Endothelial cell of umbilical vein (primary cell): ENCODE measurements at regions of chr14 and their contacts with region 1.

Region 1: DNA sequence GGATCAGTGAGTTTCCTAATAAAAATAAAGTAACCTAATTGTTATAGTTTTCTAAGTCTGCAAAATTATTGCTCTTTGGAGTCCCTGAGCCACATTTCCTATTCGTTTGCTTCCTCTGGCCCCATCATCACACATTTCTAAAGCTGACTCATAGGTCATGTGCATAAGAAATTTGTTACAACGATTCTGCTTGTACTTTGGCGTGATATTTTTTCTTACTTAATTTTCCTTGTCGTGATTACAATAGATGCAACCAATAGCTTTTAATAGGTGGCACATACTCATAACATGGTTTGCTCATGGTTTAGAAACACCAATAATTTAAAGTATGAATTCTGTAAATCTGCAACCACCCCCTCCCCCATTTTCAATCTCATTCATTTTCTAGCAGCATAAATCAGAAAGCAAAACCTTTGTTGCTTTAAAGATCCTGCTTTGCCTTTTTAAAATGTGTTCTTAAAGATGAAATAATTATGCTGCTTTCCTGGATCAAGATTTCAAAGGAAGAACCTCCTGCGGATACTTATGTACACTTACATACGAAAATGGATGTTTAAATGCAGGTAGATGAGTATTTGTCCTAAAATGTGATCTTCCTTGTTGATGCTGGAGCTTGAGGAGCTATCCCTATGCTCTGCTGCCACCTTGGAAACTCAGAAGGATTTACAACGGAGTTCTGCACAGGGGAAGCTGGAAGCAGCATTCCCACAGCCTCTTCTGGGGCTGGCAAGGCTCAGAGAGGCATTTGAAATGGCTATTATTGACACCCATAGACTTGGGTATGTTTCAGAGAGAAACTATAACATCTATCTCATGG is 1.7 kb upstream of the FLRT2 start:
- DNase-seq: peak; percentile 94
- H3K4me3 ChIP-seq: peak overlapping the region; percentile 38 to 94 (median 93)
- H3K27ac ChIP-seq: peak overlapping the region; percentile 93
- H3K4me1 ChIP-seq: peaks cover 19% of the 10 kb centered on the region
- H3K27me3 ChIP-seq: no peaks in the 10 kb centered on the region
- CTCF ChIP-seq: peak; percentile 52 to 65
- POLR2A ChIP-seq: peak; percentile 39

Region 2: GRCh38 chr14:84006643-84007155 is 1521.6 kb before region 1 on chr14:
- CTCF ChIA-PET with region 1: interaction called, 15 read pairs
- POLR2A ChIA-PET with region 1: interaction called, 4 read pairs
- dilution Hi-C with region 1: no loop called
- intact Hi-C with region 1: loop called (anchors 1 kb)
- DNase-seq: peak; percentile 96
- H3K4me3 ChIP-seq: no peak overlapping the region
- H3K27ac ChIP-seq: peak overlapping the region; percentile 61
- H3K4me1 ChIP-seq: peaks cover 10% of the 10 kb centered on the region
- H3K27me3 ChIP-seq: no peaks in the 10 kb centered on the region
- CTCF ChIP-seq: peak; percentile 10 to 11
- POLR2A ChIP-seq: no peak

Region 3: GRCh38 chr14:84482256-84483066 is 1045.8 kb before region 1 on chr14:
- CTCF ChIA-PET with region 1: interaction called, 7 read pairs
- POLR2A ChIA-PET with region 1: interaction called, 4 read pairs
- dilution Hi-C with region 1: no loop called
- intact Hi-C with region 1: loop called (anchors 1 kb)
- DNase-seq: peak; percentile 71
- H3K4me3 ChIP-seq: peak overlapping the region in 1 of 3 experiments; percentile 4
- H3K27ac ChIP-seq: peak overlapping the region; percentile 78
- H3K4me1 ChIP-seq: peaks cover 33% of the 10 kb centered on the region
- H3K27me3 ChIP-seq: no peaks in the 10 kb centered on the region
- CTCF ChIP-seq: no peak
- POLR2A ChIP-seq: no peak

Region 4: GRCh38 chr14:84806627-84807026 is 721.7 kb before region 1 on chr14:
- CTCF ChIA-PET with region 1: no interaction called
- POLR2A ChIA-PET with region 1: no interaction called
- dilution Hi-C with region 1: no loop called
- intact Hi-C with region 1: loop called (anchors 2 kb)
- DNase-seq: peak; percentile 47
- H3K4me3 ChIP-seq: no peak overlapping the region
- H3K27ac ChIP-seq: peak overlapping the region; percentile 66
- H3K4me1 ChIP-seq: peaks cover 10% of the 10 kb centered on the region
- H3K27me3 ChIP-seq: no peaks in the 10 kb centered on the region
- CTCF ChIP-seq: no peak
- POLR2A ChIP-seq: no peak

Region 5: GRCh38 chr14:85058150-85058549 is 470.1 kb before region 1 on chr14:
- CTCF ChIA-PET with region 1: no interaction called
- POLR2A ChIA-PET with region 1: no interaction called
- dilution Hi-C with region 1: no loop called
- intact Hi-C with region 1: no loop called
- DNase-seq: no peak
- H3K4me3 ChIP-seq: no peak overlapping the region
- H3K27ac ChIP-seq: no peak overlapping the region
- H3K4me1 ChIP-seq: no peaks in the 10 kb centered on the region
- H3K27me3 ChIP-seq: no peaks in the 10 kb centered on the region
- CTCF ChIP-seq: no peak
- POLR2A ChIP-seq: no peak

Region 6: DNA sequence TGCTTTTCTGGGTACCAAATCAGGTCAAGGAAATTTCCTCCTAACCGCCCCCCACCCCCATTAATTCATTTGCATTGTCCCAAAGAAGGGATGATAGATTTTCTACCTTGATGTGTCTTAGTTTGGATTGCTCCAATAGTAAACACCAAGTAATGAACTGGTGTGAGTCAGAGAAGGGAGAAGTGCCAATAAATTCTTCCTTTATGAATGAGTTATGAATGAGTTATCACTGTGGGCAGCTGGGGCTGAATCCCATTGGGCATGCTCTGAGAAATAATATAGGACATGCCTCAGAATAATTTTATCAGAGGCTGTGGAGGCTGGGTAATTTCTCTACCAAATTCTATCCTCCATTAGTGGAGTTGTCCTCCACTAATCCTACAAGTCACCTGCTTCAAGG is 276.3 kb before region 1 on chr14:
- CTCF ChIA-PET with region 1: no interaction called
- POLR2A ChIA-PET with region 1: no interaction called
- dilution Hi-C with region 1: no loop called
- intact Hi-C with region 1: loop called (anchors 2 kb)
- DNase-seq: peak; percentile 84
- H3K4me3 ChIP-seq: no peak overlapping the region
- H3K27ac ChIP-seq: no peak overlapping the region
- H3K4me1 ChIP-seq: peaks cover 19% of the 10 kb centered on the region
- H3K27me3 ChIP-seq: no peaks in the 10 kb centered on the region
- CTCF ChIP-seq: no peak
- POLR2A ChIP-seq: no peak

Region 7: DNA sequence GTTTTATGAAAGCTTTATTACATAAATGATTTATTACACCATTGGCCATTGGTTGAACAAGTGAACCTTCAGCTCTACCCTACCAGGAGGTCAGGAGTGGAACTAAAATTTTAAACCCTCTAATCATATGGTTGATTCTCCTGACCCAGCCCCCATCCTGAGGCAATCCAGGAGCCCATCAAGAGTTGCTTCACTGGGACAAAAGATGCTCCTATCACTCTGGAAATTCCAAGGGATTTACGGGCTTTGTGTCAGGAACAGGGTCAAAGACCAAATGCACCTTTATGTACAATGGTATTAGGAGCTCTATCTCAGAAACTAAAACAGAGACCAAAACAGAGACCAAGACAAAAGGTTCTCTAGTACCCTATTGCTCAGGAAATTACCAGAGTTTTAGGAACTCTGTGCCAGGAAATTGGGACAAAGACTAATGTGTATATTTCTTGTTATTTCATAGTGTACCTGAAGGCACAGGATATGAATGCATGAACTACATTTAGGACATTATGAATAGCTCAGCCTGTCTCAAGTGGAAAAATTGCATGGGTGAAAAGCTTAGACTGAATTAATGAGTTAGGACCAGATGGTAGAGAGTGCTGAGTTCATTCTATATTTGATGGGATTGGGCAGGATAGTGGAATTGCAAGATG is 170.0 kb before region 1 on chr14:
- CTCF ChIA-PET with region 1: no interaction called
- POLR2A ChIA-PET with region 1: no interaction called
- dilution Hi-C with region 1: no loop called
- intact Hi-C with region 1: loop called (anchors 2 kb)
- DNase-seq: peak; percentile 18
- H3K4me3 ChIP-seq: no peak overlapping the region
- H3K27ac ChIP-seq: no peak overlapping the region
- H3K4me1 ChIP-seq: peaks cover 15% of the 10 kb centered on the region
- H3K27me3 ChIP-seq: no peaks in the 10 kb centered on the region
- CTCF ChIP-seq: no peak
- POLR2A ChIP-seq: no peak

Region 8: DNA sequence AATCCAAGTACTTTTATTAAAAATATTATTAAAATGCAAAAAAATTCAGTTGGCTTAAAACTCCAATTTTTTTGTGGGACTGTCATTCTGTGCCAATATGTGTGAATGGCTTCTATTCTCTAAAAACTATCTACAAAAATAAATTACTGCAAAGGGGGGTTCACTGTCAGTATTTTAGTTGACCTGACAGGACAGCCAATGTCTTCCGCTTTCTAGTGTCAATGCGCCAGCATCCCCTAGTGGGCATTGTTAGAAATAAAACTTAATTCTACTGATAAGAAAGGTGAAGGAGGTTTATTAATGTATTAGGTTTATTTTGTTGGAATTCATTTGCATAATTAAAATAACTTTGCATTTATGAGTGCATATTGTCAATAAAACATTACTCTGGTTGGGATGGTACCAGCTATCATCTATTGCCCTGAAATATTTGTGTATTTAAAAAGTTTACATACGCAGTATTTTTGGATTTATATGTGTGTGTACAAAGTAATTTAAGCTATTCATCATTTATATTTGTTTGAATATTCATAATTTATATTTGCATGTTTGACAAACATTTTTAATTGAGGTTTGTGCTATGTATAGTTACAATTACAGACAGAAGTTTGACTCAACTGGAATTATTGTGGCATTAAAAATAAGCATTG is 528.9 kb after region 1 on chr14:
- CTCF ChIA-PET with region 1: interaction called, 4 read pairs
- POLR2A ChIA-PET with region 1: no interaction called
- dilution Hi-C with region 1: no loop called
- intact Hi-C with region 1: loop called (anchors 1 kb)
- DNase-seq: peak; percentile 36
- H3K4me3 ChIP-seq: no peak overlapping the region
- H3K27ac ChIP-seq: no peak overlapping the region
- H3K4me1 ChIP-seq: no peaks in the 10 kb centered on the region
- H3K27me3 ChIP-seq: no peaks in the 10 kb centered on the region
- CTCF ChIP-seq: peak; percentile 57 to 59
- POLR2A ChIP-seq: no peak